ENCODE measurements at regions of chr20 and their contacts with region 1.

Region 1: GRCh38 chr20:53149148-53149889 is 177.2 kb downstream of the TSHZ2 start:
- DNase-seq: no peak
- ATAC-seq: peak; percentile 14 to 21
- H3K4me3 ChIP-seq: no peak overlapping the region
- H3K27ac ChIP-seq: peak overlapping the region; percentile 52
- H3K4me1 ChIP-seq: peaks cover 5% of the 10 kb centered on the region
- H3K27me3 ChIP-seq: no peaks in the 10 kb centered on the region

Region 2: DNA sequence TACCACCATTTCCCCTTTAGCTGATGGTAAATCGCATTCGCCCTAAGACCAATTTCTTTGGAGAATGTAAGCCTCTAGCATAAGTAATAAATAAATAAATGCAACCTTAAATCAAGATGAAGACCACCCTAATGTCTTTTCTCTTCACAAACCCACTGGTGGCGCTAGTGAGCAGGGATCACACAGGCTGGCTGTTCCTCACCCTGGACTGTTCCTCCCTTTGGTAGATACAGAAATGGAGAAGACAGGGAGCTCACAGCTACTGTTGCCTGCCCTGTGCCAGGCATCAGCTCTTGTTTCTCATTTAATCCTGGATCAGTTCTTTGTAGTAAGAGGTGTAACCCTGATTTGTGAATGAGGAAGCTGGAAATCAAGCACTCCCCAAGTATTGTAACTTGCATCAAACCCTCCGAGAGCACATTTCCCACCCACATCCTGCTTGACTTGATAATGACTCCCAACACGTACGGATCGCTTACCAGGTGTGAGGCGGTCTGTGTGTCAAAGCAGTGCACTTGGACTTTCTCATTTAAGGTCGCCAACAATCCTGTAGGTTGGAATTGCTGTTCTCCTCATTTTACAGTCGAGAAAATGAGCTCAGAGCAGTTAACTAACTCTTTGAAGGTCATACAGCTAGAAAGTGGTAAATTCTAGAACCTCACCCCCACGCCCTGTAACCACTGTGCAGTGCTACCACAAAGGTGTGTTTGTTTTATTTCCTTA is 59.0 kb after region 1 on chr20:
- intact Hi-C with region 1: loop called in 1 of 4 experiments (anchors 10 kb)
- DNase-seq: no peak
- ATAC-seq: no peak
- H3K4me3 ChIP-seq: no peak overlapping the region
- H3K27ac ChIP-seq: no peak overlapping the region
- H3K4me1 ChIP-seq: no peaks in the 10 kb centered on the region
- H3K27me3 ChIP-seq: no peaks in the 10 kb centered on the region

Measured in right cardiac atrium (tissue), 5 donors.